Heart left ventricle (tissue), 16 donors: ENCODE measurements at regions of chr18 and their contacts with region 1.

Region 1: GRCh38 chr18:21330122-21330701 is 88.2 kb downstream of the GREB1L start:
- DNase-seq: peak in 4 of 5 donors; percentile 15 to 71 (median 41)
- ATAC-seq: peak; percentile 96 to 99 (median 98)
- H3K4me3 ChIP-seq: no peak overlapping the region
- H3K27ac ChIP-seq: peak overlapping the region; percentile 35 to 85 (median 74)
- H3K4me1 ChIP-seq: peaks cover 0 to 10% (median 0%) of the 10 kb centered on the region in 12 donors
- H3K27me3 ChIP-seq: no peaks in the 10 kb centered on the region
- CTCF ChIP-seq: no peak
- POLR2A ChIP-seq: no peak

Region 2: GRCh38 chr18:21191596-21192307 is 138.5 kb before region 1 on chr18:
- intact Hi-C with region 1: no loop called
- DNase-seq: peak; percentile 23 to 67 (median 60)
- ATAC-seq: peak in 3 of 4 donors; percentile 66 to 78 (median 78)
- H3K4me3 ChIP-seq: no peak overlapping the region
- H3K27ac ChIP-seq: no peak overlapping the region
- H3K4me1 ChIP-seq: no peaks in the 10 kb centered on the region
- H3K27me3 ChIP-seq: peaks cover 0 to 3% (median 0%) of the 10 kb centered on the region in 9 donors
- CTCF ChIP-seq: peak; percentile 24 to 61 (median 42)
- POLR2A ChIP-seq: no peak

Region 3: DNA sequence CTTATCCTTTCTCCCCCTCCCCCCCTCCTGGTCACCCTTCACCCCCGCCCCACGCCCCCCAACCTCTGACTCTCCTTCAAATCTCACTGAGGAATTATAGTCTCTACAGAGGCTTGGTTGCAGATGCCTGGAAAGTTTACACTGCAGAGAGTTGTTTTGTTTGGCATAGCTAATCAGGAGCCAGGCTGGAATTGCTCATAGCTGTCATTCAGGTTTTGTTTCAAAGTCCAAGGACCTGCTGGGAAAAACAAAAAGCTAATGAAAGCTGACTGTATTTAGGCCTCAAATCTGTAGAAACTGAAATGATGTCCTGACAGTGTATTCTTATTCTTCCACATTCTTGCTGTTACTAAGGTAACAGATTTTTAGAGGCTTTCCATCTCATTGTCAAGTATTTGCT is 65.6 kb before region 1 on chr18:
- intact Hi-C with region 1: loop called in 1 of 10 experiments (anchors 5 kb)
- DNase-seq: no peak
- ATAC-seq: peak in 2 of 4 donors; percentile 44 to 58
- H3K4me3 ChIP-seq: no peak overlapping the region
- H3K27ac ChIP-seq: no peak overlapping the region
- H3K4me1 ChIP-seq: peaks cover 0 to 15% (median 0%) of the 10 kb centered on the region in 12 donors
- H3K27me3 ChIP-seq: no peaks in the 10 kb centered on the region
- CTCF ChIP-seq: no peak
- POLR2A ChIP-seq: no peak

Region 4: DNA sequence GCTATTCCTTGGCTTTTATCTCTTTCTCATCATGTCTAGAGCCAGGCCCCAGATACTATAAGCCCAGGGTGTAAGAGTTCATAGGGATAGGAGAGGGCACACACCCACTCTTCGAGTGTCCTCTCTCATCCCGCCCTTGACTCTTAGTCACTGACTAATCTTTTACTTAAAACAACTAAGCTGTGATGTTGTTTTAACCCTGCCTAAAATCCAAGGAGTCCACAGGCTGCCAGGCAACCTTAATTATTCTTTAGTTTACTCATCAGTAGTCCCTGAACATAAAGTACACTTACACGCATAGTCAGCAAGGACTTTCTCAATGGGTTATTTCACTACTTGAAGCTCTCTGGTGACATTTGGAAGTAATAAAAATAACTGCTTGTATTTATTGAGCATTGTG is 59.8 kb before region 1 on chr18:
- intact Hi-C with region 1: loop called in 1 of 10 experiments (anchors 10 kb)
- DNase-seq: no peak
- ATAC-seq: no peak
- H3K4me3 ChIP-seq: no peak overlapping the region
- H3K27ac ChIP-seq: no peak overlapping the region
- H3K4me1 ChIP-seq: peaks cover 0 to 2% (median 0%) of the 10 kb centered on the region in 12 donors
- H3K27me3 ChIP-seq: no peaks in the 10 kb centered on the region
- CTCF ChIP-seq: no peak
- POLR2A ChIP-seq: no peak

Region 5: GRCh38 chr18:21391074-21391673 is 61.0 kb after region 1 on chr18:
- intact Hi-C with region 1: loop called in 2 of 10 experiments (anchors 10 kb)
- DNase-seq: no peak
- ATAC-seq: no peak
- H3K4me3 ChIP-seq: no peak overlapping the region
- H3K27ac ChIP-seq: no peak overlapping the region
- H3K4me1 ChIP-seq: peaks cover 0 to 7% (median 0%) of the 10 kb centered on the region in 12 donors
- H3K27me3 ChIP-seq: no peaks in the 10 kb centered on the region
- CTCF ChIP-seq: no peak
- POLR2A ChIP-seq: no peak